K562 (cell line): ENCODE measurements at regions of chr19 and their contacts with region 1.

Region 1: DNA sequence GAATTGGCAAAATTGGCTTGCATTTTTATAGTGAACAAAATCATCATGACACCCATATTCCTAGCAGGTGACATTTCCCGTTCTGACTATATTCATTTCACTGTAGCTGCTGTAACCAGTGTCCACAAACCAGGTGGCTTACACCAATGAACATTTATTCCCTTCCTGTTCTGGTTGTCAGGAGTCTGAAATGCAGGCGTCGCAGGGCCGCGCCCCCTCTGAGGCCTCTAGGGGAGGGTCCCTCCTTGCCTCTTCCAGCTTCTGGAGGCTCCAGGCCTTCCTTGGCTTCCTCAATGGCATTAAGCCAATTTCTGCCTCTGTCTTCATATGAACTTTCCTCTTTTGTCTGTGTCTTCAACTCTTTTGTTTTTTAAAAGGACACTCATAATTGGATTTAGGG is 6.5 kb upstream of the RLN3 start:
- DNase-seq: peak in 3 of 4 experiments; percentile 34 to 66 (median 37)
- ATAC-seq: peak; percentile 69
- H3K4me3 ChIP-seq: no peak overlapping the region
- H3K27ac ChIP-seq: peak overlapping the region; percentile 57; the same call in 1 of the 3 replicates
- H3K4me1 ChIP-seq: peaks cover 8 to 14% of the 10 kb centered on the region in 2 experiments
- H3K27me3 ChIP-seq: no peaks in the 10 kb centered on the region
- CTCF ChIP-seq: no peak
- EP300 ChIP-seq: no peak
- POLR2A ChIP-seq: no peak
- RAD21 ChIP-seq: no peak

Region 2: GRCh38 chr19:14006243-14006765 is 15.2 kb before region 1 on chr19 and contains the start of gene RFX1:
- CTCF ChIA-PET with region 1: no interaction called
- POLR2A ChIA-PET with region 1: interaction called, 15 read pairs
- in situ Hi-C with region 1: no loop called
- intact Hi-C with region 1: no loop called
- DNase-seq: peak; percentile 75 to 98 (median 84)
- ATAC-seq: peak; percentile 86
- H3K4me3 ChIP-seq: peak within 1 kb of the TSS; percentile 82
- H3K27ac ChIP-seq: peak within 1 kb of the TSS; percentile 100
- H3K4me1 ChIP-seq: peaks cover 45 to 46% of the 10 kb centered on the region in 2 experiments
- H3K27me3 ChIP-seq: no peaks in the 10 kb centered on the region
- CTCF ChIP-seq: no peak
- EP300 ChIP-seq: no peak
- POLR2A ChIP-seq: no peak
- RAD21 ChIP-seq: no peak
- polyA plus RNA-seq, gene RFX1: 0.14 to 0.25 TPM

Region 3: DNA sequence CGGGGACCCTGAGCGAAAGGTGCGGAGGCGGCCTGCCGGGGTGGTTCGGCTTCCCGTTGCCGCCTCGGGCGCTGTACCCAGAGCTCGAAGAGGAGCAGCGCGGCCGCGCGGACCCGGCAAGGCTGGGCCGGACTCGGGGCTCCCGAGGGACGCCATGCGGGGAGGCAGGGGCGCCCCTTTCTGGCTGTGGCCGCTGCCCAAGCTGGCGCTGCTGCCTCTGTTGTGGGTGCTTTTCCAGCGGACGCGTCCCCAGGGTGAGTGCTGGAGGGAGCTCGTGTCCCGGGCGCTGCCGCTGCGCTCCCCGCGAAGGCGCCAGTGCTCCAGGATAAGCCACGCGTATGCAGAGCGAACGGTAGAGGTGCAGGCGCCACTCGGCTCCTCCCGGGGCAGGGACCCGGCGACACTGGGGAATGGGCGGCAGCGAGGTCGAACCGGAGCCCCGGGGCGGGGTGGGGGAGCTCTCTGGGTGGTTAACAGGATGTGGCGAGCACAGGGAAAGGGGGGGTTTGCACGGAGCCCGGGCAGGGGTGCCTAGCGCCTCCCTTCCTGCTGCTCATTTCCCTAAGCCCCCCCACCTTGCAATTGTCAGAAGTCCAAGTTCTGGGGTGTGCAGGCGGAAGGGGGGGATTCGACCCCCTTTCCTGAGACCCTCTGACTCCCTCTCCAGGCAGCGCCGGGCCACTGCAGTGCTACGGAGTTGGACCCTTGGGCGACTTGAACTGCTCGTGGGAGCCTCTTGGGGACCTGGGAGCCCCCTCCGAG is 10.4 kb after region 1 on chr19 and contains the start of gene IL27RA:
- CTCF ChIA-PET with region 1: no interaction called
- POLR2A ChIA-PET with region 1: interaction called, 21 read pairs
- in situ Hi-C with region 1: no loop called
- intact Hi-C with region 1: no loop called
- DNase-seq: peak; percentile 79 to 88 (median 82)
- ATAC-seq: peak; percentile 83
- H3K4me3 ChIP-seq: peak within 1 kb of the TSS; percentile 56
- H3K27ac ChIP-seq: peak within 1 kb of the TSS; percentile 81
- H3K4me1 ChIP-seq: peaks cover 20 to 47% of the 10 kb centered on the region in 2 experiments; a peak in 4 of 5 replicates
- H3K27me3 ChIP-seq: no peaks in the 10 kb centered on the region
- CTCF ChIP-seq: peak; percentile 80 to 91 (median 84)
- EP300 ChIP-seq: no peak
- POLR2A ChIP-seq: peak; percentile 78
- RAD21 ChIP-seq: peak; percentile 74 to 76
- polyA plus RNA-seq, gene IL27RA: 1.9 to 2.1 TPM

Region 4: GRCh38 chr19:14097532-14098151 is 76.2 kb after region 1 on chr19:
- CTCF ChIA-PET with region 1: no interaction called
- POLR2A ChIA-PET with region 1: no interaction called
- in situ Hi-C with region 1: no loop called
- intact Hi-C with region 1: no loop called
- DNase-seq: peak in 2 of 4 experiments; percentile 42 to 53
- ATAC-seq: peak; percentile 90
- H3K4me3 ChIP-seq: no peak overlapping the region
- H3K27ac ChIP-seq: no peak overlapping the region
- H3K4me1 ChIP-seq: peaks cover 2 to 10% of the 10 kb centered on the region in 2 experiments; a peak in 3 of 5 replicates
- H3K27me3 ChIP-seq: no peaks in the 10 kb centered on the region
- CTCF ChIP-seq: peak; percentile 61 to 65 (median 63)
- EP300 ChIP-seq: no peak
- POLR2A ChIP-seq: no peak
- RAD21 ChIP-seq: peak in 1 of 2 experiments; percentile 43; a peak in 2 of 4 replicates